HepG2 (cell line): ENCODE measurements at regions of chr14 and their contacts with region 1.

Region 1: DNA sequence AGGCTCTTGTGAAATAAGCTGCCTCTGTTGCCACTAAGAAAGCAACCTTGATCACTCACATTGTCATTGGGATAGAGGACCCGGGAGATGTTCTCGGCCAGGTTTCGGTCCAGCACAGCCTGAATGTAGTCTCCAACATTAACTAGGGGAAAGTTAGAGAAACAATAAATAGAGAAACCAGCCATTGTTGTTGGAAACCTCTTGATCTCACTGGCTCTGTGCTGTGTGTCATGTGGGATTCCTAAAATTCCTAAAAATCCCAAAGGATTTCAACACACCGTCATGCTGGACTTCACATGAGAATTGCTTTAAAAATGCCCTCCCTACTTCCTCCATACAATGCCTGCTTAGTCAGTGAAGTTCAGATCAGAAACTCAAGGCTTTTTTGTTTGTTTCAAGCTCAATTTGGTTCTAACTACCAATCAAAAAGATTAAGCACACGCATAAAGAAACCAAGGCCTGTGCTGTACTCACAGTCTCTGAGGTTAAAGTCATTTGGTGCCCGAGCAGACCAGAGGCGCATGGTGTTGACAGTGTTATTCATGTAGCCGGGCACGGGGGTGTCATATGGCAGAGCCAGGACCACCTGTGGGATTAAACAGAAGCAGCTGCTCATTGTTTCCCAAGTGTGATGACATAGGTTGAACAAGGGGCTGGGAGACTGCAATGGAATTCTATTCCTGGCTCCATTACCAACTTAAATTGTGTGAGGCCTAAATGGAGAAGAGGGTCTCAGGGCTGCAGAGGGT is 23.6 kb downstream of the PYGL start:
- DNase-seq: peak; percentile 90
- ATAC-seq: peak; percentile 89
- H3K4me3 ChIP-seq: peak overlapping the region in 1 of 3 experiments; percentile 6; a peak in 1 of 6 replicates
- H3K27ac ChIP-seq: peak overlapping the region; percentile 66
- H3K4me1 ChIP-seq: peaks cover 46% of the 10 kb centered on the region
- H3K27me3 ChIP-seq: no peaks in the 10 kb centered on the region
- CTCF ChIP-seq: no peak
- EP300 ChIP-seq: peak in 1 of 2 experiments; percentile 60; a peak in 2 of 4 replicates
- POLR2A ChIP-seq: no peak
- RAD21 ChIP-seq: no peak

Region 2: GRCh38 chr14:50875359-50876070 is 45.1 kb before region 1 on chr14:
- CTCF ChIA-PET with region 1: no interaction called
- POLR2A ChIA-PET with region 1: no interaction called
- in situ Hi-C with region 1: no loop called
- intact Hi-C with region 1: loop called (anchors 1 kb)
- DNase-seq: peak; percentile 96
- ATAC-seq: peak; percentile 97
- H3K4me3 ChIP-seq: peak overlapping the region in 2 of 3 experiments; percentile 34 to 59; a peak in 4 of 6 replicates
- H3K27ac ChIP-seq: peak overlapping the region; percentile 69
- H3K4me1 ChIP-seq: peaks cover 74% of the 10 kb centered on the region
- H3K27me3 ChIP-seq: no peaks in the 10 kb centered on the region
- CTCF ChIP-seq: no peak
- EP300 ChIP-seq: peak; percentile 57 to 90; a peak in 3 of 4 replicates
- POLR2A ChIP-seq: no peak
- RAD21 ChIP-seq: no peak